GM10248 (cell line): ENCODE measurements at regions of chr10 and their contacts with region 1.

Region 1: DNA sequence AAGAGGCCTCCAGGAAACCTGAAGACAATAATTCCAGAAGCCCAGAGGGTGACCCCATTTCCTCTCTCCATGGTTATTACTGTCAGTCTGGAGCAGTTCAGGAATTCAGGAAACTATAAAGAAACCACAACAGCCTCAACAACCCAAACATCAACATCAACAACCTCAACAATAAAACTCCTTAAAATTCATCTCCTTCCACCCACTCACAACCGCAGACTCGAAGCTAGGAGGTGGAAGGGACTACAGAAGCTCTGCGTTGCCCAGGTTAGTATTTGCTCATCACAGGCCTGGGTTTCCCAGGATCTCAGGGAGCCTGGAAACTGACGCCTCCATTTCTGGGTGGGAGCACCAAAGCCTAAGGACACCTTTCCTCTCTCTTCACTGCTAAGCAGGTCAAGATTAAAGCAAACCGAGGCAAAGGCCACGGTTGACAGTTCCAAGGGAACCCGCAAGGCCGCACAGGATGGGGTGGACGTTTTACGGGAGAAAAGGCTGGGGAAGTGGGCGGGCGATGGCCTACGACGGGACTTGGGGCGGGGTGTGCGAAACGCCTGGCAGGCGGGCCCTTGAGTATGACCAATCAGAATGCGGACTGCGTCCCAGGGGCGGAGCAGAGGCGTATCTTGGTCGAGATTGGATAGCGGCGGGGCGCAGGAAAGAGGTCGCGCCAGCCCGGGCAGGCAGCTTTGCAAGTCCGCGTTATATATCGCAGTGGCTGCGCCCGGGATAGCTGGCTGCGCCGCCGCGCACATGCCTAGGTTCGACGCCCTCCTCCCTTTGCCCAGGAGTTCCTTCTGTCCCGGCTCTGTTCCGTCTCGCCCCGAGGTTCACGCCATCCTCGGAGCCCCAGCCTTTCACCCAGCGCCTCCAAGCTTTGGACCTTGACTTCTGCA is at the start of gene ELOVL3:
- DNase-seq: peak; percentile 94
- CTCF ChIP-seq: no peak

Region 2: DNA sequence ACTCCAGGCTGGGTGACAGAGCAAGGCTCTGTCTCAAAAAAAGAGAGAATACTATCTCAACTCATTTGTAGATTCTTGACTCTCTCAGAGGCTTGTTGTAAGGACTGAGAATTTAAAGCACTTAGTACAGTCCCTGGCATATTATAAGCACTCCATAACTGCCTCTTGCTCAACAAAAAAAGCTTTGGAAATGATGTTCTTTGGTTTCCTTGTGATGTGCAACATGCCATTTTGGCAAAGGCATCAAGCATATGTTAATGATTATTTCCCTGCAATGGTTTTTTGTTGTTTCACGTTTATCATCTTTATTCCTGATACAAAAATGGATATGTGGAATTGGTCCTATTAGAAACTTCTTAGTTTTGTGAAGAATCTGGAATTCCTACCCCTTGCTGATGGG is 58.0 kb before region 1 on chr10:
- CTCF ChIA-PET with region 1: interaction called, 45 read pairs
- POLR2A ChIA-PET with region 1: no interaction called
- DNase-seq: no peak
- CTCF ChIP-seq: no peak

Region 3: DNA sequence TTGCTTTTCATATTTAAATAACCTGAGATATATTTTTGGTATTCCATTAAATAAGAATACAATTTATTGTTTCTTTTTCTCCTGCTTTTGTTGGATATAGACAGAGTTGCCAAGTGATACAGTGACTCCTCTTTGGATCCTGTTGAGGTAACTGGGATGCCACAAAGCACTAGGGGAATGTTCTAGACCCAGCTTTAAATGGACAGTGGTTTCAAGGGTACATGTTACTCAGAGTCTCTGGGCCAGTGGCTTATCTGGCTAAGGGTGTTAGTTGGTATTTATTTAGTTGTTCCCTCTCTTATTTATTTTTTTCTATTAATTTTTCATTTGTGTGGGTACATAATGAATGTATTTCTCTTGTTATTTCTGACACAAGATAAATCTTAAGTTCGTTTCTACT is 28.5 kb after region 1 on chr10:
- CTCF ChIA-PET with region 1: interaction called, 45 read pairs
- POLR2A ChIA-PET with region 1: no interaction called
- DNase-seq: no peak
- CTCF ChIP-seq: no peak

Region 4: DNA sequence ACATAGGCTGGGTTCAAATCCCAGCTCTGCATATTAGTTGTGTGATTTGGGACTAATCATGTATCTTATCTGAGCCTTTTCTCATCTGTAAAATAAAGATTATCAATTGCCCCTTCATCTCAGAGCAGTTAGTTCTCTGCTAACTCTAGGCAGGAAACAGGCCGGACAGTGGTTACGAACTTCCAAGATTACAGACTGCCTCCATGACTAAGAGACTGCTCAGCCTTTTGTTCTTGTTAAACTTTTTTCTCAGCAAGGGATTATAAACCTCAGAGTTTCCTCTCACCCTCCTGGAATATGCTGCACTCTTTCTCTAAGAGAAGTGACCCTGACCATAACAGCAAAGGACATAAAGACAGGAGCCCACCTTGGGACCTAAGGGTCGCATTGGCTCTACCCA is 117.1 kb after region 1 on chr10:
- CTCF ChIA-PET with region 1: interaction called, 566 read pairs
- POLR2A ChIA-PET with region 1: no interaction called
- DNase-seq: no peak
- CTCF ChIP-seq: no peak

Region 5: GRCh38 chr10:102394079-102394800 is 168.3 kb after region 1 on chr10:
- CTCF ChIA-PET with region 1: interaction called, 213 read pairs
- POLR2A ChIA-PET with region 1: no interaction called
- DNase-seq: peak; percentile 98
- CTCF ChIP-seq: no peak

Region 6: DNA sequence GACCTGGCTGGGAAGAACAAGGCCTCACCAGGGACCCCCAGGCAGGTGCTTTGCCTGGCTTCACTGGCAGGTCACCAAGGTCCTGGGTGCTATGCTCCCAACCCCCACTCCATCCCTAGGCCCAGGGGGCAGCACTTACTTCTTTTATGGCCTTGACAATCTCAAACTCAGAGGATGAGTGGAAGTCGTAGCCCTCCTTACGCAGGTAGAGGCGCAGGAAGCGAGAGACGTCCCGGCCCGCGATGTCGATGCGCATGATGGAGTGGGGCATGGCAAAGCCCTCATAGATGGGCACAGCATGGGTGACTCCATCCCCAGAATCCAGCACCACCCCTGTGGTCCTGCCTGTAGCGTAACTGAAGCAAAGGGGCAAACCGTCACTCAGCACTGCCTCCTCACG is 258.1 kb after region 1 on chr10:
- CTCF ChIA-PET with region 1: interaction called, 73 read pairs
- POLR2A ChIA-PET with region 1: no interaction called
- DNase-seq: peak; percentile 4
- CTCF ChIP-seq: no peak